Stomach (tissue), 19 donors: ENCODE measurements at regions of chr12 and their contacts with region 1.

Region 1: GRCh38 chr12:6825398-6826124 is 2.6 kb upstream of the P3H3 start:
- DNase-seq: peak; percentile 87 to 94
- H3K4me3 ChIP-seq: peak overlapping the region in 1 of 4 donors; percentile 27
- H3K27ac ChIP-seq: peak overlapping the region in 1 of 5 donors; percentile 25
- H3K4me1 ChIP-seq: peaks cover 35 to 74% (median 55%) of the 10 kb centered on the region in 4 donors
- H3K27me3 ChIP-seq: peaks cover 0 to 93% (median 38%) of the 10 kb centered on the region in 3 donors
- CTCF ChIP-seq: peak in 5 of 7 experiments; percentile 85 to 92 (median 88)
- EP300 ChIP-seq: no peak
- POLR2A ChIP-seq: no peak

Region 2: GRCh38 chr12:6140651-6141447 is 684.7 kb before region 1 on chr12:
- intact Hi-C with region 1: no loop called
- DNase-seq: peak in 1 of 2 donors; percentile 55
- H3K4me3 ChIP-seq: no peak overlapping the region
- H3K27ac ChIP-seq: peak overlapping the region; percentile 64 to 81 (median 66)
- H3K4me1 ChIP-seq: peaks cover 0 to 30% (median 6%) of the 10 kb centered on the region in 4 donors
- H3K27me3 ChIP-seq: no peaks in the 10 kb centered on the region
- CTCF ChIP-seq: no peak
- EP300 ChIP-seq: no peak
- POLR2A ChIP-seq: no peak

Region 3: DNA sequence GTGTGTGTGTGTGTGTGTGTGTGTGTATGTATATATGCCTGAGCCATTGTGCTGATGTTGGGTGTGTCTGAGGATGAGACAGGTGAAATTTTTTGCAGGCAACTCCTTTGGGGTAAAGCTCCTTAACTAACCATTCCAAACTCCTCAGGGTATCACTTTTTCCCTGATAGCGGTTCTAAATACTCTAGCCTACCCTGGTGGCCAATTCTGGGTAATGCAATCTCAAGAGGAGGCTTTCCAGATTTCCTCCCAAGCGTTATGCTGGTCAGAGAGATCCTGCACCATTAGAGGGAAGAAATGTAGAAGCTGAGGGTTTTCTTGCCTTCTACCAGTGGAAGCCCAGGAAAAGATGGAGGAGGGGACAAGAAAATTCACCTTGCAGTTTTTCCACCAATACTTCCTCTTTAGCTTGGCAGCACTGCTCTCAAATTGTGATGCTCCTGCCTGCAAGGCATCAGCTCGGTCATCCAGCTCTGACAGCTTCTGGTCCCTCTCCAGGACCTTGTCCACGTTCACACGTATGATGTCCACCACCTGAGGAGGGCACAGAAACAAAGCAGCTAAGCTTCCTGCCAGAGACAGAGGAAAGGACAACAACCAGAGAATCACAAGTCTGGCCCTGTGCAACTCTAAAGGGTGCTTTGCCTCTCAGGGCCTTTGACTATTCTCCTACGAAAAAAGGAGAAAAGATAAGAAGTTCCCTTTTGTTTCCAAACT is 359.9 kb before region 1 on chr12:
- intact Hi-C with region 1: no loop called
- DNase-seq: peak; percentile 53 to 88
- H3K4me3 ChIP-seq: no peak overlapping the region
- H3K27ac ChIP-seq: peak overlapping the region in 2 of 5 donors; percentile 12 to 25
- H3K4me1 ChIP-seq: peaks cover 27 to 86% (median 35%) of the 10 kb centered on the region in 4 donors
- H3K27me3 ChIP-seq: no peaks in the 10 kb centered on the region
- CTCF ChIP-seq: peak in 6 of 7 experiments; percentile 50 to 94 (median 80)
- EP300 ChIP-seq: no peak
- POLR2A ChIP-seq: no peak

Region 4: DNA sequence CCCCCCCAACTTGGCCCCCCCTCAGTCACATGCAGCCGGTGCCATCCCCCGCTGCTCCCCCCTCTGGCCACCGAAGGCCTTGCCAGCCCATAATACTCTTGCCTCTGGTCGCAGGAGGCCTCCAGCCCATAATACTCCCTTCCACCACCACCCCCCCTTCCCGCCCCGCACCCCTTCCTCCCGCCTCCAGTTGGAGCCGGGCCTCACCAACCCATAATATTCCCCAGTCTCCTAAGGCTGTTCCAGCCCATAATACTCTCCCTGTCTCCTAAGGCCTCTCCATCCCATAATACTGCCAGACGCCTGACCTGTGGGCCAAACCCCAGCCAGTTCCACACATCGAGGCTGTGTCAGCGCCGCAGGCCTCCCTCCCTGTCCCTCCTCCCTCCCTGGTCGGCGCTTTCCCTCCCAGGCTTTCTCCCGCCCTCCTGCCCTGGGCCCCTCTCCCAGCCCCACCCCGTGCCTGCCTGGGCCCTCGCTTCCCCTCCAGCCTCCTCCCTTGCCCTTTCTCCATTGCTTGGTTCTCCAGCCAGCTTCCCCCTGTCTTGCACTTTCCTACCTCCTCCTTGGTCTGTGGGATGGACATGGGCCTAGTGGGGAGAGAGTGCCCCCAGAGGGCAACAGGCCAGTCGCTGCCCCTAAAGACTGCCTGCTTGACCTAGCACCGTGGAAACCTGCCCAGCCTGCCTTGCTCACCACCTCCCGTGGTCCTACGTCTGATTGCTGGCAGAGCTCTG is 211.6 kb before region 1 on chr12:
- intact Hi-C with region 1: no loop called
- DNase-seq: peak; percentile 90 to 98
- H3K4me3 ChIP-seq: peak overlapping the region in 2 of 4 donors; percentile 15 to 37
- H3K27ac ChIP-seq: peak overlapping the region; percentile 69 to 94 (median 91)
- H3K4me1 ChIP-seq: peaks cover 29 to 47% (median 34%) of the 10 kb centered on the region in 4 donors
- H3K27me3 ChIP-seq: no peaks in the 10 kb centered on the region
- CTCF ChIP-seq: peak in 2 of 7 experiments; percentile 5 to 13
- EP300 ChIP-seq: no peak
- POLR2A ChIP-seq: no peak

Region 5: GRCh38 chr12:6745741-6746525 is 79.6 kb before region 1 on chr12:
- intact Hi-C with region 1: loop called (anchors 10 kb)
- DNase-seq: no peak
- H3K4me3 ChIP-seq: no peak overlapping the region
- H3K27ac ChIP-seq: peak overlapping the region in 4 of 5 donors; percentile 13 to 68 (median 56)
- H3K4me1 ChIP-seq: peaks cover 0 to 12% (median 3%) of the 10 kb centered on the region in 4 donors
- H3K27me3 ChIP-seq: no peaks in the 10 kb centered on the region
- CTCF ChIP-seq: no peak
- EP300 ChIP-seq: no peak
- POLR2A ChIP-seq: no peak

Region 6: DNA sequence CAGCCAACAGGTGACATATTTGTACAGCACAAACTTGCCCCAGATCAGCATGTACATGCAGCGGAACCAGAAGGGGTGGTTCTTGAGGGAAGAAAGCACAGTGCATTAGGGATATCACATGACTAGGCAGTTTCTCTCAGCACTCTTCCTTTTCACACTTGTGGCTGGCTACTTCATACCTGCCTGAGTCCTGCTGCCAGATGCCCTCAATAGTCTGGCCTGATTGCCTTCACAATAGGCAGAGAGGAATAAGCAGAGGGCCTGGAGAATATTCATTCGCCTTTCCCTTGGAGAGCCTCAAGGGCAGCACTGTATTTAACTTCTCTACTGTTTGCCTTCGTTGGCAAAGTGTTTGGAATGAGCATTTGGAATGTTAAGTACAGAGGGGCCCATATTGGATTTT is 153.0 kb after region 1 on chr12:
- intact Hi-C with region 1: no loop called
- DNase-seq: peak in 1 of 2 donors; percentile 38
- H3K4me3 ChIP-seq: no peak overlapping the region
- H3K27ac ChIP-seq: peak overlapping the region; percentile 55 to 71 (median 61)
- H3K4me1 ChIP-seq: peaks cover 30 to 44% (median 38%) of the 10 kb centered on the region in 4 donors
- H3K27me3 ChIP-seq: no peaks in the 10 kb centered on the region
- CTCF ChIP-seq: peak in 1 of 7 experiments; percentile 22
- EP300 ChIP-seq: no peak
- POLR2A ChIP-seq: no peak